AG04449 (cell line): ENCODE measurements at regions of chr17 and their contacts with region 1.

Region 1: GRCh38 chr17:48074315-48075081 is 26.3 kb downstream of the NFE2L1 start:
- DNase-seq: peak; percentile 52
- H3K4me3 ChIP-seq: no peak overlapping the region
- CTCF ChIP-seq: peak; percentile 56

Region 2: DNA sequence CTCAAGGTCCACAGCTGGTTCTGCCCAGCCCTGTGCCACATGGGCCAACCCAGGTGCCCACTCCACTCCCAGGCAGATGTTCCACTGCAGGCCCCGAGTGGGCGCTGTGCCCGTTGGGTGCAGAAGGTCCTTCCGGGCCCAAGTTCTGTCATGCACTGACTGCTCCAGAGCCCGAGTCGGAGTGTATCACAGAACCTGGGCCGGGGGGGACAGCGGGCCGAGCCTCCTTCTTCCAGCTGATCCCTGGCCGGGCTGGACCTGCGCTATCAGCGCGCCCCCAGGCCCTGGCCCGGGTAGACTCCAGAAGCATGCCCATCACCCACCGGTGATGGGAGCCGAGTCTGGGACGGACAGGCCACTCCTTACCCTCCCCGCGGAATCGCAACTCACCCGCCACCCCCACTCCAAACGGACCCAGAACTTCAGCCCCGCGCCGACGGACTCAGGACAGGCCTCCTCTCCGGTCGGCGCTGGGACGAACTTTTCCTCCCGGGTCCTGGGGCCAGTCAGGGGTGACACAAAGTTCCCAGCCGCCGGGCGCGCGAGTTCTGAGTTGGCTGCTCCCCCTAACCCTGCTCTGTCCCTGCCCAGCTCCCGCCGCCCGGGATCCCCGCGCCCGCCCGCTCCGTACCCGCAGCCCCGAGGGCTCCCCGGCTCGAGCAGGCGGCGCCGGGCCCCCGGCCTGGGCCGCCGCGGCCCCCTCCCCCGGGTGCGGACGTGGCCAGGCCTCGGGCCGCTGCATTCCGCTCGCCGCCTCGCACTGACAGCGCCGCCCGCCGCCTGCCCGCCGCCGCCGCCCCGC is 37.3 kb before region 1 on chr17 and contains the start of gene COPZ2:
- CTCF ChIA-PET with region 1: interaction called, 305 read pairs
- POLR2A ChIA-PET with region 1: no interaction called
- DNase-seq: no peak
- H3K4me3 ChIP-seq: peak within 1 kb of the TSS; percentile 76
- CTCF ChIP-seq: peak; percentile 81

Region 3: DNA sequence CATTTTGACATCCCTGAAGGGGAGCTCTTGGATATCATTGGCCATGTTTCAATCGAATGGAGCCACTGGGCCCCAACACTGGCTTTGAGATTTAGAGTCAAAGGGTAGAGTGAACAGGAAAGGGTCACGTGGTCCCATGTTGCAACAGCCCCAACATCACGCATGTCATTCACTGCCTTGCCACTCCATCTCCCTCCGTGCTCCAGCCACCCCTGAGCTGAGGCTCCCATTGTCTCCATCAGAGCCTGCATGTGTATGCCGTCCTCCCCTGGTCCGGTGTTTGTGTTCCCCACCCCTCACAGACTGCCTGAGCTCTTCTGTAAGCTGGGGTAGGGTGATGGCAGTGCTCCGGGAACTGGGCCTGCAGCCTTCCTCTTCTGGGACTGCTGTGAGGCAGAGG is 14.2 kb before region 1 on chr17:
- CTCF ChIA-PET with region 1: interaction called, 41 read pairs
- POLR2A ChIA-PET with region 1: no interaction called
- DNase-seq: no peak
- H3K4me3 ChIP-seq: no peak overlapping the region
- CTCF ChIP-seq: no peak

Region 4: GRCh38 chr17:48093341-48094045 is 19.0 kb after region 1 on chr17:
- CTCF ChIA-PET with region 1: interaction called, 56 read pairs
- POLR2A ChIA-PET with region 1: no interaction called
- DNase-seq: no peak
- H3K4me3 ChIP-seq: no peak overlapping the region
- CTCF ChIP-seq: no peak

Region 5: GRCh38 chr17:48107168-48108132 is 33.0 kb after region 1 on chr17 and contains the start of gene SNX11:
- CTCF ChIA-PET with region 1: interaction called, 15 read pairs
- POLR2A ChIA-PET with region 1: no interaction called
- DNase-seq: peak; percentile 24
- H3K4me3 ChIP-seq: peak within 1 kb of the TSS; percentile 97
- CTCF ChIP-seq: no peak

Region 6: DNA sequence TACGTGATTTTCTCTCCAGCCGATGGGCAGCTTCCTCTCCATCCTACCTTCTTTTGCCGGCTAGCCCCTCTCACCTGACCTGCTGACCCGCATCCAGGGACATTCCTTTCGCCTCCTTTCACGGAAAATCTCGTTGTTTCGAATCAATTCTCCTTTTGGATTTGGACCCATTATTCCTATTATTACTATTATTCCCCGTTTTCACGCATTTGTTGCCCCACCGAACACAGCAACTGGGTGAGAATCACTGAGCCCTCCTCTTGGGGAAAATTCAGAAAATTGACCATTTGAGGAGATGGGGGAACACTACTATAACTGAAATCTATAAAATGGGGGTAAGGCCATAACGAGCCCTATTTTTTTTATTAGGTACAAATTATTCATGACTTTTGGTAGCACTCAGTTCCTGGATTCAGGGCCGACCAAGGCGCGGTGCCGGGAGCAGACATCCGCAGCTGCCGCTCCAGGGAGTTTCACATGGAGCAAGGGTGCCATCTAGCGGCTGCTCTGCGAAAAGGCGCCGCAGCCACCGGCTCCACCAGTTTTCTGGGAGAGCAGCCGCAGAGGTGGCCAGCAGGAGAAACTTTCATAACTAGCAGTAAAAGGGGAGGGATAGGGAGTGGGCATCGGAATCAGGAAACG is 543.9 kb after region 1 on chr17:
- CTCF ChIA-PET with region 1: interaction called, 10 read pairs
- POLR2A ChIA-PET with region 1: no interaction called
- DNase-seq: no peak
- H3K4me3 ChIP-seq: peak overlapping the region; percentile 29
- CTCF ChIP-seq: peak; percentile 88